Activated CD4-positive, alpha-beta memory T cell treated with anti-CD3 and anti-CD28 coated beads, Interleukin-2, amount 10 ng/mL, durations not matched to agents 7 days and 5 days (primary cell): ENCODE measurements at regions of chr9 and their contacts with region 1.

Region 1: GRCh38 chr9:137095664-137096517 is 9.1 kb downstream of the MAN1B1 start:
- DNase-seq: peak; percentile 91
- H3K4me3 Mint-ChIP-seq: peak overlapping the region; percentile 62
- H3K27ac Mint-ChIP-seq: peak overlapping the region; percentile 89
- H3K4me1 Mint-ChIP-seq: peaks cover 21% of the 10 kb centered on the region
- H3K27me3 Mint-ChIP-seq: no peaks in the 10 kb centered on the region

Region 2: GRCh38 chr9:137055385-137056364 is 40.2 kb before region 1 on chr9:
- CTCF ChIA-PET with region 1: interaction called, 10 read pairs
- POLR2A ChIA-PET with region 1: no interaction called
- DNase-seq: no peak
- H3K4me3 Mint-ChIP-seq: no peak overlapping the region
- H3K27ac Mint-ChIP-seq: no peak overlapping the region
- H3K4me1 Mint-ChIP-seq: no peaks in the 10 kb centered on the region
- H3K27me3 Mint-ChIP-seq: peaks cover 16% of the 10 kb centered on the region

Region 3: DNA sequence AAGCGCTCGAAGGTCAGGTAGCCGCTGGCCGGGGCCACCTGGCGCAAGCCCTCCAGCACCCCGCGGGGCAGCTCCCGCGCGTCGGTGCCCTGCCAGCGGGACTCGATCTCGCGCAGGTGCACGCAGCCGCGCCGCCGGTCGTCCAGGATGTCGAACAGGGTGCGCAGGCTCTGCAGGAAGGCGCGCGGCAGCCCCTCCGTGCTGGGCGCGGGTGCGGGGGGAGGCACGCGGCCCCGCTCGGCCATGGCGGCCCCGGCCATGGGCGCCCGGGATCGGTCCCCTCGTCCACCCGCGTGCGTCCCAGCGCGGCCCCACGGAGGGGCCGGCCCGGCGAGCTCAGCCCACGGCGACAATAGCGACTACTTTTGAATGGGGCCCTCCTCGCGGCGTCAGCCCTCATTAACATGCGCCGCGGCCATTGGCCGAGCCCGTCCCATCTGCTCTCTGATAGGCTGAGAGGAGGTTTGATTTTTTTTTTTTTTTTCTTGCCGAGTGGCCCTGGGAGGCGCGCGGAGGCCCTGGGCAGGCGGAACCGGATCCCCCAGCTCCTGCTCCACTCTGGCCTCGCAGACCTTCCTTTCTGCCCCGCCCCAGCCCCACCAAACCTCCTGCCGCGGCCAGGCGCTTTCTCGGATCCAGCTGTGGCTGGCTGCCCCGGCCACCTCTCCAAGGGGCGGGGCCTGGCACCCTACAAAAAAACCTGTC is 25.5 kb before region 1 on chr9 and contains the start of gene SAPCD2:
- CTCF ChIA-PET with region 1: interaction called, 39 read pairs
- POLR2A ChIA-PET with region 1: interaction called, 17 read pairs
- DNase-seq: peak; percentile 90
- H3K4me3 Mint-ChIP-seq: peak within 1 kb of the TSS; percentile 73
- H3K27ac Mint-ChIP-seq: peak within 1 kb of the TSS; percentile 63
- H3K4me1 Mint-ChIP-seq: peaks cover 37% of the 10 kb centered on the region
- H3K27me3 Mint-ChIP-seq: no peaks in the 10 kb centered on the region
- total RNA-seq, gene SAPCD2: 26.8 to 27.0 TPM

Region 4: GRCh38 chr9:137114610-137115391 is 18.9 kb after region 1 on chr9 and contains the start of gene DPP7:
- CTCF ChIA-PET with region 1: interaction called, 9 read pairs
- POLR2A ChIA-PET with region 1: interaction called, 28 read pairs
- DNase-seq: peak; percentile 84
- H3K4me3 Mint-ChIP-seq: peak within 1 kb of the TSS; percentile 69
- H3K27ac Mint-ChIP-seq: peak within 1 kb of the TSS; percentile 56
- H3K4me1 Mint-ChIP-seq: peaks cover 5% of the 10 kb centered on the region
- H3K27me3 Mint-ChIP-seq: no peaks in the 10 kb centered on the region
- total RNA-seq, gene DPP7: 253 to 257 TPM

Region 5: DNA sequence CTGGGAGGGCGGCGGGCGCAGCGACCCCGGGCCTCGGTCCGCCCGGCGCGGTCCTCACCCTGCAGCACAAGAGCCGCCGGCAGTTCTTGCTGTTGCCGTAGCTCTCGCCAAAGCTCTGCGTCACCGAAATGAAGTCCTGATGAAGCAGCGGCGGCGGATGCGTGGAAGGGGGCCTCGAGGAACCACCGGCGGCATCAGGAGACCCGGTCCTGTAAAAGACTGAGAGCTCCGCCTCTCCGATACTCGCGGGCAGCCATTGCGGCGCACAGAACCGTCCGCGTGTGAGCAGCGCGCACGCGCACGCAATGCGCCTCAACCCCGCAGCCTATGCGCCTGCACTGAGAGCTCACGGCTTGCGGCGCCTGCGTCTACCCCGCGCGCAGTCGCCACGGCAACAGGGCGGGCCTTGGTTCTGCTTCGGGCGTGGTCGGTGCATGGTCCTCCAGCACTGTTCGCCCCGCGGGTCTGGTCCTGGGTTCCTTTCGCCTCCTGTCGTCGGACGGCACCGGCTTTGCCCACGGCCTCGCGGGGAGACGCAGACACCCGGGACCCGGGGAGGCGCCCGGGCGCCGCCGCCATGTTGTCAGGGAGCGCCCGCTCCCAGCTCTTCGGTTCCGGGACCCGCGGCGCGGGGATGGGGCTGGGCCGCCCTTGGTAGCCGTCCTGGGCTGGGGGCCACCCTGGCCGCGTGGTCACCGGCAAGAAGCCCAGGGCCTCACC is 33.7 kb after region 1 on chr9:
- CTCF ChIA-PET with region 1: interaction called, 25 read pairs
- POLR2A ChIA-PET with region 1: interaction called, 13 read pairs
- DNase-seq: peak; percentile 93
- H3K4me3 Mint-ChIP-seq: peak overlapping the region; percentile 81
- H3K27ac Mint-ChIP-seq: peak overlapping the region; percentile 83
- H3K4me1 Mint-ChIP-seq: peaks cover 30% of the 10 kb centered on the region
- H3K27me3 Mint-ChIP-seq: peaks cover 4% of the 10 kb centered on the region

Region 6: DNA sequence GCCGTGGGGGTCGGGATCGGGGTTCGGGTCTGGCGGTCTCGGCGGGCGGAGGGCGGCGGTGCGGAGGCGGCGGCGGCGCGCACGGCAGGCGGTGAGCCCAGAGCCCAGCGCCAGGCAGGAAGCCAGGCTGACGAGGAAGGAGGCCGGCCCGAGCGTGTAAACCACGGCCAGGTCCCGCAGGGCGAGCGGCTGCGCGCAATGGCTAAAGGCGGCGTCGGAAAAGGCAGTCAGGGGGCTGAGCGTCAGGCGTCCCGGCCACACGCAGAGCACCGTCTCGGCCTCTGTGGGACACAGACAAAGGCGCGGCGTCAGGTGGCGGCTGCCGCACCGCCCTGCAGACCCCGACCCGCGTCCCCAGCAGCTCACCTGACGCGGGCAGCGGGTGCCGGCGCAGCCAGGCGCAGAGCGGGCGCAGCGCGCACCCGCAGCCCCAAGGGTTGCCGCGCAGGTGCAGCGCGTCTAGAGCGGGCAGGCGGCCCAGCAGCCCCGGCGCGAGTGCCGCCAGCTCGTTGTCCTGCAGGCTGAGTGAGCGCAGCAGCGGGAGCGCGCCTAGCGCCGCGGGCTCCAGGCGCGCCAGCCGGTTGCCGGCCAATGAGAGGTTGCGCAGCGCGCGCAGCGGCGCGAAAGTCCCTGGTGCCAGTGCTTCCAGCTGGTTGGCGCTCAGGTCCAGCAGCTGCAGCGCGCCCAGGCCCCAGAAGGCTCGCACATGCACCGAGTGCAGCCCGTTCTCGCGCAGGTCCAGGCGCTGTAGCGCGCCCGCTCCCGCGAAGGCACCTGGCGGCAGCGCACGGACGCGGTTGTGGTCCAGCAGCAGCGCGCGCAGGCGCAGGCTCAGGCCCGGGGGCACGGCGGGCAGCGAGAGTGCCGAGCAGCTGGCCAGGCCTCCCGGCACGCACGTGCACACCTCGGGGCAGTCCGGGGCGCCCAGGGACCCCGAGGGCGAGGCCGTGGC is 73.3 kb after region 1 on chr9:
- CTCF ChIA-PET with region 1: no interaction called
- POLR2A ChIA-PET with region 1: no interaction called
- DNase-seq: no peak
- H3K4me3 Mint-ChIP-seq: peak overlapping the region; percentile 56
- H3K27ac Mint-ChIP-seq: no peak overlapping the region
- H3K4me1 Mint-ChIP-seq: peaks cover 3% of the 10 kb centered on the region
- H3K27me3 Mint-ChIP-seq: peaks cover 45% of the 10 kb centered on the region

Region 7: DNA sequence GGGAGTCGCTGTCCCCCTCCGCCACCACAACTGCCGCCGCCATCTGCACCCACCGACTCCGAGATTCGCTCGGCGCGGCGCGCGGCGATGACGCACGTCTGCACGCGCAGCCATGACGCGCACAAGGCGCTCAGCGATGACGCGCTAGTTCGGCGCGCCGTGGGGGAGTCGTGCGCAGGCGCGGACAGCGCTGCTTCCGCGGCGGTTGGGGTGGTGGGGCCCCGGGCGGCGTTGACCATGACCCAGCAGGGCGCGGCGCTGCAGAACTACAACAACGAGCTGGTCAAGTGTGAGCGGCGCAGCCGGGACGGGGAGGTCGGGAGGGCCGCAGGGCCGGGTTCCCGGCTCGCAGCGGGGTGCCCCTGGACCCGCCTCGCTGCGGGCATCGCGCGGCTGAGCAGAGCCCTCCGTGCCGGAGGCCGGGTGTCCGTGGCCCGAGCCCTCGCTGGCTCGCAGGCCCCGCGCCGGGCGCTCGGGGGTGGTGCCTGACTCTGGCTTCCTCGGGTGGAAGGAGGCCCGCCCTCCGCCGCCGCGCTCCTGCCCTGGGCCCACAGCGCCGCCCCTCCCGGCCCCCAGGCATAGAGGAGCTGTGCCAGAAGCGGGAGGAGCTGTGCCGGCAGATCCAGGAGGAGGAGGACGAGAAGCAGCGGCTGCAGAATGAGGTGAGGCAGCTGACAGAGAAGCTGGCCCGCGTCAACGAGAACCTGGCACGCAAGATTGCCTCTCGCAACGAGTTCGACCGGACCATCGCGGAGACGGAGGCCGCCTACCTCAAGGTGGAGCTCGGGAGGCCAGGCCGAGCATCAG is 92.8 kb after region 1 on chr9 and contains the starts of genes ANAPC2 and SSNA1:
- CTCF ChIA-PET with region 1: interaction called, 10 read pairs
- POLR2A ChIA-PET with region 1: interaction called, 8 read pairs
- DNase-seq: peak; percentile 94
- H3K4me3 Mint-ChIP-seq: peak within 1 kb of the TSS; percentile 93
- H3K27ac Mint-ChIP-seq: peak within 1 kb of the TSS; percentile 97
- H3K4me1 Mint-ChIP-seq: peaks cover 40% of the 10 kb centered on the region
- H3K27me3 Mint-ChIP-seq: no peaks in the 10 kb centered on the region
- total RNA-seq, gene ANAPC2: 53.3 to 57.8 TPM
- total RNA-seq, gene SSNA1: 70.0 to 76.3 TPM

Region 8: DNA sequence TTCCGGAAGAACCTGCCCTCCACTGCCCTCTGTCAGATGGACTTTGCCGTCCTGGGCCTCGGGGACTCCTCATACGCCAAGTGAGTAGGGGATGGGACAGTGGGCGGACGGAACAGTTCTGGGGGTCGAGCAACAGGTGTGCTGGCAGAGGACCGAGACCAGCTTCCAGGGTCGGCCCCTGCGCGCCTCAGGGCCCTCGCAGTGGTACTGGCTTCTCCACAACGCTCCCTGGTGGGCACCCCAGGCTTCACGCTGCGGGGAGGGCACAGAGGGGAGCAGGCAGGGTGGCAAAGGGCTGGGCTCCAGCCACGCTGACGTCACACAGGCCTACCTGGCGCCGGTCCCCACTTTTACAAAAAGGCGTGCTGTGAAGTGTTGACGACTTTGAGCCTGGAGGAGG is 116.6 kb after region 1 on chr9:
- CTCF ChIA-PET with region 1: no interaction called
- POLR2A ChIA-PET with region 1: no interaction called
- DNase-seq: no peak
- H3K4me3 Mint-ChIP-seq: no peak overlapping the region
- H3K27ac Mint-ChIP-seq: no peak overlapping the region
- H3K4me1 Mint-ChIP-seq: peaks cover 7% of the 10 kb centered on the region
- H3K27me3 Mint-ChIP-seq: no peaks in the 10 kb centered on the region

Region 9: DNA sequence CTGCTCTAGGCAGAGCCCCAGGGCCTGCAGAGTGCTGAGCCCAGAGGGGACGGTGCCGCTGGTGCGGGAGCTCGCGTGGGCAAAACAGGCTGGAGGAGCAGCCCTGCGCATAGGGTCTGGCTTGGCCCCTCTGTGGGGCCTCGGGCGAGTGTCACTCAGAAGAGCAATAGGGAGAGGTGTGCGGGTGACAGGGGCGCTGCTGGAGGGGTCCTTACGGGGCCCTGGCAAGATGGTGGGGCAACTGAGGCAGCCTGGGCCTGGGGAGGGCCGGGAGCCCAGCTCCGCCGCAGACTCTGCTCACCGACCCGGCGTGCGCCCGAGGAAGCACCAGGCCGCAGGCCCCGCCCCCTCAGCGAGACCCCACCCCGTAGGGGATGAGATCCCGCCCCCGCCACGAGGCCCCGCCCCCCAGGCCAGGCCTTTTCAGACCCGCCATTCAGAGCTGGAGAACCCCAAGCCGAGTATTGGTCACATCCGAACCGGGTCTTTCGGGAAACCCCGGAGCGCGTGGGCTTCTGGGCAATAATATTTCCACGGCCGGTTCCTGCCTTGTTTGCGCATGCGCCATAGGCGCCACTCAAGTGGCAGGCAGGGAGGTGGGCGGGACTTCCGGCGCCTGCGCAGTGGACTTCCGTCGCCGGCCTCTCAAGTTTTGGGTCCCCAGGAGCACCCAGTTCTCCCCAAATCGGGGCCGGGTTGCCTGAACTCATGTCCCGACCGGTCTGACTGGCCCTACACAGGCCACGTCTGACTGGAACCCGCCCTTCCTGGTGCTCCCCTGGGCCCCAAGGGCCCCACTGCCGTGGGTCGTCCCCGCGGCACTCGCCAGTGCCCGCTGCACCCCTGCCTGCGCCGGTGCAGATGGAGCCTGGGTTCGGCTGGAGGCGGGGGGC is 127.4 kb after region 1 on chr9:
- CTCF ChIA-PET with region 1: interaction called, 21 read pairs
- POLR2A ChIA-PET with region 1: interaction called, 4 read pairs
- DNase-seq: peak; percentile 99
- H3K4me3 Mint-ChIP-seq: peak overlapping the region; percentile 74
- H3K27ac Mint-ChIP-seq: peak overlapping the region; percentile 79
- H3K4me1 Mint-ChIP-seq: peaks cover 27% of the 10 kb centered on the region
- H3K27me3 Mint-ChIP-seq: no peaks in the 10 kb centered on the region

Region 10: DNA sequence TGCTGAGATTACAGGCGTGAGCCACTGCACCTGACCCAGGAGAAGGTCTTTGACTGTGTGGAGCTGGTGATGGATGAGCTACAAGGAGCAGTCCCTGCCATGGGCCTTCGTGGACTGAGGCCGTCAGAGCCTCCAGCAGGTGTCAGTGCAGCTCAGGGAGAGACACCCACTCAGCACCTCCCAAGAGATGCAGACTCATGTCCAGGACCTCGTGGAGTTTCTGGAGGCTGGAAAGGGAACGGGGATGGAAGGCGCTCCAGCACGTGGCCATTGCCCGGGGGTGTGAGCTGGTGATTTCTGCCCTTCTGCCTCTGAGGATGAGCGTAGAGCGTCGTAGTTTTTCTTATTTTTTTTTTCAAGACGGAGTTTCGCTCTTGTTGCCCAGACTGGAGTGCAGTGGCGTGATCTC is 191.1 kb after region 1 on chr9:
- CTCF ChIA-PET with region 1: no interaction called
- POLR2A ChIA-PET with region 1: no interaction called
- DNase-seq: peak; percentile 50
- H3K4me3 Mint-ChIP-seq: no peak overlapping the region
- H3K27ac Mint-ChIP-seq: no peak overlapping the region
- H3K4me1 Mint-ChIP-seq: peaks cover 8% of the 10 kb centered on the region
- H3K27me3 Mint-ChIP-seq: peaks cover 4% of the 10 kb centered on the region